ENCODE measurements at regions of chr11 and their contacts with region 1.

Region 1: GRCh38 chr11:93234602-93235207 is 36.9 kb upstream of the SLC36A4 start:
- DNase-seq: peak; percentile 22 to 72 (median 59)
- ATAC-seq: peak; percentile 89
- H3K4me3 ChIP-seq: no peak overlapping the region
- H3K4me3 Mint-ChIP-seq: no peak overlapping the region
- H3K27ac ChIP-seq: no peak overlapping the region
- H3K27ac Mint-ChIP-seq: no peak overlapping the region
- H3K4me1 ChIP-seq: no peaks in the 10 kb centered on the region
- H3K4me1 Mint-ChIP-seq: no peaks in the 10 kb centered on the region
- H3K27me3 ChIP-seq: no peaks in the 10 kb centered on the region
- H3K27me3 Mint-ChIP-seq: peaks cover 20% of the 10 kb centered on the region
- CTCF ChIP-seq: peak; percentile 66

Region 2: GRCh38 chr11:92550411-92550810 is 684.3 kb before region 1 on chr11:
- CTCF ChIA-PET with region 1: no interaction called
- POLR2A ChIA-PET with region 1: no interaction called
- intact Hi-C with region 1: no loop called
- DNase-seq: no peak
- ATAC-seq: no peak
- H3K4me3 ChIP-seq: no peak overlapping the region
- H3K4me3 Mint-ChIP-seq: no peak overlapping the region
- H3K27ac ChIP-seq: no peak overlapping the region
- H3K27ac Mint-ChIP-seq: no peak overlapping the region
- H3K4me1 ChIP-seq: no peaks in the 10 kb centered on the region
- H3K4me1 Mint-ChIP-seq: no peaks in the 10 kb centered on the region
- H3K27me3 ChIP-seq: no peaks in the 10 kb centered on the region
- H3K27me3 Mint-ChIP-seq: no peaks in the 10 kb centered on the region
- CTCF ChIP-seq: no peak

Region 3: DNA sequence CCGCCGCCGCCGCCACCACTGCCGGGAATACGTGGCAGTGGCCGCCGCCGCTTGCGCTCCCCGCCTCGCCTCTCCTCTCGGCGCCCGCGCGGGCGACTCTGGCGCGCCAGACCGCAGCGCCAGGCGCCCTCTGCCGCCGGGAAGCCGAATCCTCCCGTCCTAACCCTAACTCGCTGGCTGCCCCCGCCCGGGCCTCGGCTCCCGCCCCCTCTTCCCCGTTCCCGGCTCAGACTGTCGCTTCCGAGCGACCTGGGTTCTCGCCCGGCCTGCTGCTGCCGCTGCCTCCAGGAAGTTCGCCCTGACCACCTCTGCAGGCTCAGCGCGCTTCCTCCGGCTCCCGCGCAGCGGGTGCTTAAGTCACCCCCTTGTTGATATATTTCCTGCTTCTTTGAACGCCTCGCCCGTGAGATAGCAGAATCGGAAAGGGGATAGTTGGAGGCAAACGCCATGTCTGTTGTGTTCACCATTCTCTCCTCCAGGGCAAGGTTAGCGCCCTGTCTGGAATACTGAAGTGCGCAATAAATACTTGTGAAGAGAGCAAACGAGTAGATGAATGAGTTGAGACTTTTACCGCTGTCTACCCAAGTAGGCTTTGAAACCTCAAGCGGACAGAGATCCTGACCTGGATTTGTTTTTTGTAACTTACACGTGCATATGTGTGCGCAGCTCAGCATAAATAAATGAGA is 308.7 kb after region 1 on chr11 and contains the start of gene SMCO4:
- CTCF ChIA-PET with region 1: interaction called, 9 read pairs
- POLR2A ChIA-PET with region 1: no interaction called
- intact Hi-C with region 1: loop called in 1 of 2 experiments (anchors 1 kb)
- DNase-seq: peak; percentile 18 to 77 (median 55)
- ATAC-seq: peak; percentile 73
- H3K4me3 ChIP-seq: peak within 1 kb of the TSS; percentile 54 to 55
- H3K4me3 Mint-ChIP-seq: peak within 1 kb of the TSS; percentile 90
- H3K27ac ChIP-seq: no peak within 1 kb of the TSS
- H3K27ac Mint-ChIP-seq: peak within 1 kb of the TSS; percentile 78
- H3K4me1 ChIP-seq: peaks cover 10% of the 10 kb centered on the region
- H3K4me1 Mint-ChIP-seq: peaks cover 18% of the 10 kb centered on the region
- H3K27me3 ChIP-seq: peaks cover 0 to 2% of the 10 kb centered on the region in 2 experiments
- H3K27me3 Mint-ChIP-seq: peaks cover 11% of the 10 kb centered on the region
- CTCF ChIP-seq: peak; percentile 44
- total RNA-seq, gene SMCO4: 1.9 TPM in 1 of 2 experiments, not detected in the other